ENCODE measurements at regions of chr14 and their contacts with region 1.

Region 1: DNA sequence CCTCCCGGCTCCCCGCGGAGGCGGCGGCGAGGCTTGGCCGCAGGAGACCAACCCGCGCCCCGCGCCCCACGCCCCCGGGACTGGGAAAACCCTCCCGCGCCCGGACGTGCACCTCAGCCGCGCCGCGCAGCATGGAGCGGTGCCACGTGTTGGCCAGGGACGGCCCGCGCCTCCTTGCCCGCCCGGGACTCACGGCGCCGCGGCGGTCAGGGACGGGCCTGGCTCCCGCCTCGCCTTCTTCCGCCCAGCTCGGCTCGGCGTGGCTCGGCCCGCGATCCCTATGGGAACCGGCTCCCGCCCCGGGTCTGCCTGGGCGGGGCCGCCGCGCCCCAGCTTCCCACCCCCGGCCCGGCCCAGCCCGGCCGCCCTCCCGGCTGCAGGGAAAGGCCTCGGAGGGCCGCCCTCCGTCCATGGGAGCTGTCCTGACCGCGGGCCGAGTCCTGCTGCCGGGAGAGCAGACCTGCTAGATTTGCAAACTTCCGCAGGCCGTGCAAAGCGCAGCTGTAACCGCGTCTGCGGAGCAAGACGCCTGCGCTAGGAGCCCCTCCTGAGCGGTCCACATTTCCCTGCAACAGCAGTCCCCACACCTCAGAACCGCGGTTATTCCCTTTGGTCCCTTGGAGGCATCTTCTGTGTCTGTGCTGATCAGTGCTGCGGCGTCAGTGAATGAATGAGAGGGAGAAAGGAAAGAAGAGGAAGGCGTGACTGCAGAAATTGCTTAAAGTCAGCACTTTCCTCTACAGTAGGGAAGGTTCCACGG is at the start of gene CDKL1:
- DNase-seq: peak; percentile 78
- H3K4me3 ChIP-seq: peak within 1 kb of the TSS; percentile 53 to 67 (median 62)
- H3K27ac ChIP-seq: peak within 1 kb of the TSS; percentile 84 to 95 (median 94)
- H3K4me1 ChIP-seq: peaks cover 16 to 63% (median 27%) of the 10 kb centered on the region in 4 donors
- H3K27me3 ChIP-seq: no peaks in the 10 kb centered on the region
- CTCF ChIP-seq: no peak
- EP300 ChIP-seq: no peak
- POLR2A ChIP-seq: peak; percentile 29
- total RNA-seq, gene CDKL1: 15.3 to 36.8 (median 28.2) TPM

Region 2: GRCh38 chr14:50311975-50312733 is 84.7 kb before region 1 on chr14 and contains the starts of genes DMAC2L and L2HGDH:
- in situ Hi-C with region 1: no loop called
- intact Hi-C with region 1: loop called (anchors 10 kb)
- DNase-seq: peak; percentile 95
- H3K4me3 ChIP-seq: peak within 1 kb of the TSS; percentile 55 to 90 (median 72)
- H3K27ac ChIP-seq: peak within 1 kb of the TSS; percentile 92 to 98 (median 93)
- H3K4me1 ChIP-seq: peaks cover 6 to 20% (median 13%) of the 10 kb centered on the region in 4 donors
- H3K27me3 ChIP-seq: no peaks in the 10 kb centered on the region
- CTCF ChIP-seq: peak in 1 of 5 experiments; percentile 28
- EP300 ChIP-seq: no peak
- POLR2A ChIP-seq: peak; percentile 84
- total RNA-seq, gene DMAC2L: 3.0 to 18.9 (median 9.2) TPM
- total RNA-seq, gene L2HGDH: 0.80 to 73.3 (median 8.3) TPM

Region 3: DNA sequence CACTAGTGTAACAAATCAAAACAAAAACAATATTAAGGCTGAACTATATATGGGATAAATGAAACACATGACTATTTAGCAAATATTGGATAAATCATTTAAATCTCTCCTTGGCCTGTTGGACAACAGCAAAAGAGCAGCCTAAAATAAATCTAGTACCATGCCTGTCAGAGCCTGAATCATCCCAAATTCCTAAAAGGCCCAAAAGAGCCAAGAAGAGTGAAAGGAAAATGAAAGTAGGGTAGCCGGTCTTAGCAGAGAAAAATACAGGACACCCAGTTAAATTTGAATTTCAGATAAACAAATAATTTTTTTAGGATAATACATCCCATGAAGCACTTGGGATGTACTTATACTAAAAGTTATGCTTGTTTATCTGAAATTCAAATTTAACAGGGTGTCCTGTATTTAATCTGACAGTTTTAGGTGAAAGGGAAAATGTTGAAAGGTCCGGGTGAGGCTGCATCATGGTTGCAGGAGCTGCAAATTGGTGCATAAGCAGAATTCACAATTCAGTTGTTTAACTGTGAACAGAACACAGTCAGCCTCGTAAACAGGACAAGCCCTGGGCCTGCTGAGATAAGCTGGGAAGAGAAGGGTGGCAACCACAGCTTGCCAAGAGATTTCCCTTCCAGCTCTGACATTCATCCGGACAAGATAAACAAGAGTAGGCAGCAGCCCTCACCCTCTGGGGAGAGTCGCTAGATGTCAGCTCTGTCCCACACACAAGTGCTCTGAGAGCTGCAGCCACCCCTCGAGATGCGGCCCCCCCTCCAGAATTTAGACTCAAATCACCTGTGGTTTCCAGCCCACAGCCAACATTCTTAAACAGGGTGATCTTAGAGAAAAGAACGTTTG is 54.4 kb before region 1 on chr14:
- in situ Hi-C with region 1: loop called in 1 of 4 experiments (anchors 10 kb)
- intact Hi-C with region 1: no loop called
- DNase-seq: peak; percentile 45
- H3K4me3 ChIP-seq: peak overlapping the region in 3 of 4 donors; percentile 1 to 13 (median 6)
- H3K27ac ChIP-seq: peak overlapping the region; percentile 60 to 75 (median 74)
- H3K4me1 ChIP-seq: peaks cover 7 to 67% (median 32%) of the 10 kb centered on the region in 4 donors
- H3K27me3 ChIP-seq: no peaks in the 10 kb centered on the region
- CTCF ChIP-seq: peak in 2 of 5 experiments; percentile 8 to 22
- EP300 ChIP-seq: no peak
- POLR2A ChIP-seq: no peak

Region 4: DNA sequence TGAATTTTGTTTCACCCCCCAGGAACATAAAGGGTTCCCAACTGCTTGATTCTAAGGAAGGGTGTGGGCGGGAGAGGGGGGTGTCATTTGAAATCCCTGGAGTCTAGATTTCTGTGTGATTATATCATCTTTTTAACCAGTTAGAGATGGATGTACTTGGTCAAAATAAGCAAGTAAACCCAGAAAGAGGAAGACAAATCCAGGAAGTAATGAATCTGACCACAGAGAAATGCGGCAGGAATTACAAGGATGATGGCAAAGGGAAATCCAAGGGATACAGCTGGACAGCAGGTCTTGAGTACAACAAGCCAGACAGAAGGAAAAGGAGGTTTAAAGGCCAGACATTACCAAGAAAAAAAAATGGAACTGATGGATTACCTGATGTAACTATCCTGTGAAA is 45.8 kb before region 1 on chr14:
- in situ Hi-C with region 1: loop called in 1 of 4 experiments (anchors 10 kb)
- intact Hi-C with region 1: loop called (anchors 5 kb)
- DNase-seq: no peak
- H3K4me3 ChIP-seq: no peak overlapping the region
- H3K27ac ChIP-seq: no peak overlapping the region
- H3K4me1 ChIP-seq: peaks cover 0 to 18% (median 3%) of the 10 kb centered on the region in 4 donors
- H3K27me3 ChIP-seq: no peaks in the 10 kb centered on the region
- CTCF ChIP-seq: no peak
- EP300 ChIP-seq: no peak
- POLR2A ChIP-seq: no peak

Region 5: GRCh38 chr14:50559990-50560930 is 163.4 kb after region 1 on chr14 and contains the start of gene ATL1:
- in situ Hi-C with region 1: no loop called
- intact Hi-C with region 1: no loop called
- DNase-seq: peak; percentile 68
- H3K4me3 ChIP-seq: peak within 1 kb of the TSS; percentile 37 to 82 (median 65)
- H3K27ac ChIP-seq: peak within 1 kb of the TSS; percentile 87 to 93 (median 92)
- H3K4me1 ChIP-seq: peaks cover 3 to 22% (median 5%) of the 10 kb centered on the region in 4 donors
- H3K27me3 ChIP-seq: no peaks in the 10 kb centered on the region
- CTCF ChIP-seq: no peak
- EP300 ChIP-seq: no peak
- POLR2A ChIP-seq: peak; percentile 38
- total RNA-seq, gene ATL1: 1.1 to 14.1 (median 11.4) TPM in 3 of 4 donors, not detected in the other

Region 6: DNA sequence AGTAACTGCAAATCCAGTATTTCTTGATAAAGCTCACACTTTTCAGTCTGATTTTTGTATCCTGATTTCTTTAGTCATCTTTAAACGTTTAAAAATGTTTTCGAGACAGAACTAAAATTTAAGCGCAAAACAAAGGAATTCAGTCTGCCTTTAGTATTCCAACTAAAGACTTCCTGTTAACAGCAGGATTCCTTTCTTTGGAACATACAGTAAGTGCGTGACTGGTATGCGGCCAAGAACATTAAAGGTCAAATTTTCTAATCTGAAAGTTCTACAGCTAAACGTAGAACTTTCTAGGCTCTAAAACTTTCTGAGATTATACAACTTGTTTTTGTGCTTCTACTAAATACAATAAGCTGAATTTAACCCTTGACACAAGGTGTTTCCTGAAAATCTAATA is 261.4 kb after region 1 on chr14:
- in situ Hi-C with region 1: no loop called
- intact Hi-C with region 1: no loop called
- DNase-seq: no peak
- H3K4me3 ChIP-seq: no peak overlapping the region
- H3K27ac ChIP-seq: peak overlapping the region in 3 of 4 donors; percentile 5 to 17 (median 6)
- H3K4me1 ChIP-seq: peaks cover 0 to 9% (median 6%) of the 10 kb centered on the region in 4 donors
- H3K27me3 ChIP-seq: no peaks in the 10 kb centered on the region
- CTCF ChIP-seq: no peak
- EP300 ChIP-seq: no peak
- POLR2A ChIP-seq: no peak

Measured in transverse colon (tissue), 4 donors.